CD4-positive, alpha-beta memory T cell (primary cell): ENCODE measurements at regions of chr4 and their contacts with region 1.

Region 1: GRCh38 chr4:88823058-88823919 is 125.7 kb upstream of the NAP1L5 start:
- DNase-seq: peak; percentile 79 to 91 (median 88)
- H3K4me3 ChIP-seq: peak overlapping the region; percentile 57 to 72
- H3K4me3 Mint-ChIP-seq: peak overlapping the region; percentile 89 to 98 (median 94)
- H3K27ac ChIP-seq: peak overlapping the region; percentile 71
- H3K27ac Mint-ChIP-seq: peak overlapping the region; percentile 92 to 99 (median 98)
- H3K4me1 ChIP-seq: peaks cover 33% of the 10 kb centered on the region
- H3K4me1 Mint-ChIP-seq: peaks cover 23 to 45% (median 32%) of the 10 kb centered on the region in 4 donors
- H3K27me3 ChIP-seq: no peaks in the 10 kb centered on the region
- H3K27me3 Mint-ChIP-seq: peaks cover 0 to under 1% of the 10 kb centered on the region in 2 donors

Region 2: GRCh38 chr4:88378691-88379559 is 444.4 kb before region 1 on chr4 and contains the start of gene HERC6:
- CTCF ChIA-PET with region 1: no interaction called
- POLR2A ChIA-PET with region 1: no interaction called
- intact Hi-C with region 1: loop called (anchors 5 kb)
- DNase-seq: peak; percentile 74 to 89 (median 80)
- H3K4me3 ChIP-seq: peak within 1 kb of the TSS; percentile 82 to 96
- H3K4me3 Mint-ChIP-seq: peak within 1 kb of the TSS; percentile 95 to 99 (median 97)
- H3K27ac ChIP-seq: peak within 1 kb of the TSS; percentile 86
- H3K27ac Mint-ChIP-seq: peak within 1 kb of the TSS; percentile 94 to 98 (median 97)
- H3K4me1 ChIP-seq: peaks cover 37% of the 10 kb centered on the region
- H3K4me1 Mint-ChIP-seq: peaks cover 37 to 54% (median 43%) of the 10 kb centered on the region in 4 donors
- H3K27me3 ChIP-seq: no peaks in the 10 kb centered on the region
- H3K27me3 Mint-ChIP-seq: no peaks in the 10 kb centered on the region
- total RNA-seq, gene HERC6: 26.8 to 29.5 TPM

Region 3: GRCh38 chr4:88523325-88524129 is 299.8 kb before region 1 on chr4 and contains the start of gene PYURF:
- CTCF ChIA-PET with region 1: no interaction called
- POLR2A ChIA-PET with region 1: no interaction called
- intact Hi-C with region 1: loop called (anchors 2 kb)
- DNase-seq: peak; percentile 60 to 73 (median 64)
- H3K4me3 ChIP-seq: peak within 1 kb of the TSS; percentile 62 to 69
- H3K4me3 Mint-ChIP-seq: peak within 1 kb of the TSS; percentile 91 to 97 (median 94)
- H3K27ac ChIP-seq: peak within 1 kb of the TSS; percentile 60
- H3K27ac Mint-ChIP-seq: peak within 1 kb of the TSS; percentile 89 to 96 (median 93)
- H3K4me1 ChIP-seq: peaks cover 17% of the 10 kb centered on the region
- H3K4me1 Mint-ChIP-seq: peaks cover 22 to 46% (median 32%) of the 10 kb centered on the region in 4 donors
- H3K27me3 ChIP-seq: no peaks in the 10 kb centered on the region
- H3K27me3 Mint-ChIP-seq: no peaks in the 10 kb centered on the region
- total RNA-seq, gene PYURF: 54.5 to 60.4 TPM

Region 4: GRCh38 chr4:88809576-88810219 is 13.6 kb before region 1 on chr4:
- CTCF ChIA-PET with region 1: interaction called, 10 read pairs
- POLR2A ChIA-PET with region 1: no interaction called
- intact Hi-C with region 1: no loop called
- DNase-seq: no peak
- H3K4me3 ChIP-seq: no peak overlapping the region
- H3K4me3 Mint-ChIP-seq: peak overlapping the region in 1 of 8 donors; percentile 9
- H3K27ac ChIP-seq: no peak overlapping the region
- H3K27ac Mint-ChIP-seq: peak overlapping the region in 1 of 7 donors; percentile 14
- H3K4me1 ChIP-seq: no peaks in the 10 kb centered on the region
- H3K4me1 Mint-ChIP-seq: peaks cover 0 to 15% (median under 1%) of the 10 kb centered on the region in 4 donors
- H3K27me3 ChIP-seq: no peaks in the 10 kb centered on the region
- H3K27me3 Mint-ChIP-seq: no peaks in the 10 kb centered on the region

Region 5: DNA sequence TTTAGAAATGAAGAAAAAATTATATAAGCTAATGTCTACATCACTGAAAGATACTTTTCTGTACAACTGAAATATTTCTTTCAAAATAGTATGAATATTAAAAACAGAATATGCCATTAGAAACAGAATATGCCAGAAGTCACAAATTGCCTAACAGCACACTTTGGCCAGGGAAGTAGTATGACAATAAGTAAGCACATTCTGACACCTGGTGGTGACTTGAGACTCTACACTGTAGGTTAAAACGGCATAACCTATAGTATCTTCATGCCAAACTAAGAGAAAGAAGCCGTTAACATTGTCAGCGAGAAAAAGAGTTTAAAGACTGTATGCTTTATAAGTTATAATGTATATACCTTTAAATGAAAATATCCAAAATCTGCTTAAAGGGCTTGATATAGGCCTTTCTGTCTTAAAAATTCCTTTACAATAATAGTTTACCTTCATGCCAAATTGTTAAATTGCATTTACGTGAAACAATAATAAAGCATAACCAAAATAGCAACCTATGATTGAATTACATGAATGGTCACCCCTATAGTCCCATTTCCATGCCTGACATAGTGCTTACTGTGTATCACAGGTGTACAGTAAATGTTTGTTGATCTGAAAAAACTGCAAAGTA is 200.9 kb after region 1 on chr4:
- CTCF ChIA-PET with region 1: interaction called, 394 read pairs
- POLR2A ChIA-PET with region 1: interaction called, 14 read pairs
- intact Hi-C with region 1: loop called (anchors 1 kb)
- DNase-seq: peak; percentile 69 to 75 (median 73)
- H3K4me3 ChIP-seq: no peak overlapping the region
- H3K4me3 Mint-ChIP-seq: no peak overlapping the region
- H3K27ac ChIP-seq: no peak overlapping the region
- H3K27ac Mint-ChIP-seq: peak overlapping the region in 1 of 7 donors; percentile 39
- H3K4me1 ChIP-seq: no peaks in the 10 kb centered on the region
- H3K4me1 Mint-ChIP-seq: peaks cover 0 to 7% (median under 1%) of the 10 kb centered on the region in 4 donors
- H3K27me3 ChIP-seq: no peaks in the 10 kb centered on the region
- H3K27me3 Mint-ChIP-seq: no peaks in the 10 kb centered on the region

Region 6: DNA sequence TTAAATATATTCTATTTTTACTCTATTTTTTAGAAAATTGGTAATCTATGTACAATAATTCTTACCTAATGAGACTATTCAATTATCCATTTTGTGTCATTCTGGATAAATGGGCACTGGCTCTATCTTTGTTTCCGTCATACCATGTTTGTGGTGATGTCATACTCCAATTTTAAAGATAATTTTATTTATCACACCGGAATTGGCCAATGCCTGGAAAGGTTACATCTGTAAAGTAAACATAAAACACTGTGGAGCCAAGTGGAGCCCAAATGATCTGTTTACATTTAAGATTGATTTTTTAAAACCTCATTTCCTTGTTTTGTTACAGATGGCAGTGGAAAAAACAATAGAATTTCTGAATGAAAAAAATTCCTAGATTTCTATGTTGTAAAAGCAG is 604.5 kb after region 1 on chr4:
- CTCF ChIA-PET with region 1: no interaction called
- POLR2A ChIA-PET with region 1: no interaction called
- intact Hi-C with region 1: no loop called
- DNase-seq: no peak
- H3K4me3 ChIP-seq: no peak overlapping the region
- H3K4me3 Mint-ChIP-seq: no peak overlapping the region
- H3K27ac ChIP-seq: no peak overlapping the region
- H3K27ac Mint-ChIP-seq: no peak overlapping the region
- H3K4me1 ChIP-seq: no peaks in the 10 kb centered on the region
- H3K4me1 Mint-ChIP-seq: peaks cover 0 to 3% (median 0%) of the 10 kb centered on the region in 4 donors
- H3K27me3 ChIP-seq: no peaks in the 10 kb centered on the region
- H3K27me3 Mint-ChIP-seq: peaks cover 0 to 3% of the 10 kb centered on the region in 2 donors